Activated CD4-positive, alpha-beta memory T cell treated with anti-CD3 and anti-CD28 coated beads for 36 hours (primary cell): ENCODE measurements at regions of chr13 and their contacts with region 1.

Region 1: GRCh38 chr13:98664039-98664438 is 87.1 kb upstream of the STK24 start:
- DNase-seq: peak; percentile 87
- H3K4me3 Mint-ChIP-seq: no peak overlapping the region
- H3K27ac Mint-ChIP-seq: peak overlapping the region; percentile 56
- H3K4me1 Mint-ChIP-seq: peaks cover 16% of the 10 kb centered on the region
- H3K27me3 Mint-ChIP-seq: peaks cover 9% of the 10 kb centered on the region

Region 2: GRCh38 chr13:99057310-99057975 is 393.4 kb after region 1 on chr13:
- CTCF ChIA-PET with region 1: no interaction called
- POLR2A ChIA-PET with region 1: no interaction called
- intact Hi-C with region 1: loop called (anchors 10 kb)
- DNase-seq: no peak
- H3K4me3 Mint-ChIP-seq: no peak overlapping the region
- H3K27ac Mint-ChIP-seq: no peak overlapping the region
- H3K4me1 Mint-ChIP-seq: peaks cover 56% of the 10 kb centered on the region
- H3K27me3 Mint-ChIP-seq: no peaks in the 10 kb centered on the region